ENCODE measurements at regions of chr7 and their contacts with region 1.

Region 1: GRCh38 chr7:5083311-5083711 is 37.7 kb downstream of the RBAK start:
- DNase-seq: no peak
- H3K4me3 Mint-ChIP-seq: no peak overlapping the region
- H3K27ac Mint-ChIP-seq: no peak overlapping the region
- H3K4me1 Mint-ChIP-seq: no peaks in the 10 kb centered on the region
- H3K27me3 Mint-ChIP-seq: peaks cover 4% of the 10 kb centered on the region

Region 2: DNA sequence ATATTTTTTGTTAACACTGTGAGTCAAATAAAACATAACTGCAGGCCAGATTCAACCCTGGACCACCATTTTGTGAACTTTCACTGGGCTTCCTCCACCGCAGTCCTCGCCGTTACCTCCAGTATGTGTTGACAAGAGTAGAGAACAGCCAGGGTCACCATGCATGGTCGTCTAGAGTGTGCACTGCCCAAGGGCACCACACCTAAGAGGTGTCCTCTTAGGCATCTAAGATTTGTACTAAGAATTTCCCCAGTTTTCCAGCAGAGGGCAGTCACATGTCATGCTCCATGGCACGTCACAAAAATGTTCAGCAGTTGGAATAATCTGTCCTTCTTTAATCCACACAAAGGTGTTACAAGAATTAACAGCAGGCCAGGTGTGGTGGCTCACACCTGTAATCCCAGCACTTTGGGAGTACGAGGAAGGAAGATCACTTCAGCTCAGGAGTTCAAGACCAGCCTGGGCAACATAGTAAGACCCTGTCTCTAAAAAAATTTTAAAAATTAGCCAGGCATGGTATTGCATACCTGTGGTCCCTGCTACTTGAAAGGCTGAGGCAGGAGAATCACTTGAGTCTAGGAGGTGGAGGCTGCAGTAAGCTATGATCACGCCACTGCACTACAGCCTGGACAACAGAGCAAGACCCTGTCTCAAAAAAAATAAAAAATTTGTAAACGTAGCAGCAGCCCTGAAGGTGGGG is 472.4 kb before region 1 on chr7:
- intact Hi-C with region 1: loop called (anchors 1 kb)
- DNase-seq: peak; percentile 40
- H3K4me3 Mint-ChIP-seq: no peak overlapping the region
- H3K27ac Mint-ChIP-seq: no peak overlapping the region
- H3K4me1 Mint-ChIP-seq: peaks cover 17% of the 10 kb centered on the region
- H3K27me3 Mint-ChIP-seq: no peaks in the 10 kb centered on the region

Region 3: DNA sequence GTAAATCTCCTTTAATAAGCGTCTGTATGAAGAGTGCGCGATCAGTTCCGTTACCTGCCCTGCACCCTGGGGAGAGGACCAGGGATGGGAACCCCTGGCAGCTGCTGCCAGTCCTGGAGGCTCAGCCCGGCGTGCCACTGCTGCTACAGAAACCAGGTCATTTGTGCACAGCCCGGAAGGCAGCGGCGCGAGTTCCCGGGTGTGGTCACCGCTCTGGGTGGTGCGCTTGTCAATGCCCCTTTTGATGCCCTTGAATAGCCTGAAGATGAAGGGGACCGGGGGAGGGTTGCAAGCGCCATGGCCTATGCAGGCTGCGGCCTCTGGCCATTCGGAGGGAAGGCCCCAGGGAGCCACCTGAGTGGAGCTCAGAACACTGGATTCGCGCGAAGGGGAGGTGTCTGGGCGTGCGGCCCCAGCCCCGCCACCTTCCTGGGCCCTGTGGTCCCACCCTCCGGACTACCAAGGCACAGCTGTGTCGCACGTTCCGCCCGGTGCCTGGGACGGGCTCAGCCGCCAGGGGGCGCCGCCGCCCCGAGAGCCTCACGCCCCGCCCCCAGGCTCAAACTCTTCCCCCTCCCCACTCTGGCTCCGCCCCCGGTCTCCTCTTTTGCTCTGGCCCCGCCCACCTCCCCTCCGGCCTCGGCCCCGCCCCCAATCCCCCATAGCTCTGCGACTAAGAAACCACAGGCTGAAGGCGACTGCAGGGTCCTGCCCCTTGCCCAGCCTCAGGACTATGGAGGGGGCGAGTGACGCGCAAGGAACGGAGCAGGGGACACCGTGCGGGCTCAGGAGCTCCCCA is 291.4 kb before region 1 on chr7:
- intact Hi-C with region 1: loop called (anchors 1 kb)
- DNase-seq: peak; percentile 70
- H3K4me3 Mint-ChIP-seq: no peak overlapping the region
- H3K27ac Mint-ChIP-seq: no peak overlapping the region
- H3K4me1 Mint-ChIP-seq: no peaks in the 10 kb centered on the region
- H3K27me3 Mint-ChIP-seq: no peaks in the 10 kb centered on the region

Region 4: DNA sequence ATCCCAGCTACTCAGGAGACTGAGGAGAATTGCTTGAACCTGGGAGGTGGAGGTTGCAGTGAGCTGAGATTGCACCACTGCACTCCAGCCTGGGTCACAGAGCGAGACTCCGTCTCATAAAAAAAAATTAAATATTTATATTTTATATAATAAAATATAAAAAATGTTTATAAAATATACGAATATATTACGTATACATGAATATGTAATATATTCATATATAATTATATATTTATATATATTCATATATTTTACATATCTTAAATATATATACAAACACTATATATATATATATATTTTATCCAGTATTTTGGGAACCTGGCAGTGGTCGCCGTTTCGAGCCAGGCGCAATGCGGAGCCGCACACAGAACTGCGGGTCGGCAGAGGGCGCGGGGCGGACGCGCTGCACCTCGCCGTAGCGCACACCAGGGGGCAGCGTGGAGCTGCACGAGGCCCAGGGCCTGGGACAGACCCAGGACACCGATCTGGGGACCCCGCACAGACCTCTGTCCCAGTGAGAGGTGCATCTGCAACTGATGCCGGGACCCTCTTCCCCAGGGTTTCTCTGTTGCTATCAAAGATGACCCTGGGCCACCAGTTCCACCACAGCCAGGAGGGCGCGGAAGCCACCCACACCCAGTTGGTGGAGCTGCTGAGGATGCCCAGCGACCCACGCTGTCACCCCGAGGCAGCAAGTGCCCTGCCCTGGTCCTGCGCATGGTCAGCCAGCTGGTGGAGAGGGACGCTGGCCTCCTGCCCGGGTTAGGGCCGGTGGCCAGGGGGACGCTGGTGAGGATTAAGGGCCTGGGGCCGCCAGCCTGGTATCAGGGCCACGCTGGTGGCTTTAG is 285.2 kb before region 1 on chr7:
- intact Hi-C with region 1: loop called (anchors 1 kb)
- DNase-seq: peak; percentile 52
- H3K4me3 Mint-ChIP-seq: no peak overlapping the region
- H3K27ac Mint-ChIP-seq: no peak overlapping the region
- H3K4me1 Mint-ChIP-seq: no peaks in the 10 kb centered on the region
- H3K27me3 Mint-ChIP-seq: no peaks in the 10 kb centered on the region

Region 5: GRCh38 chr7:4830176-4830575 is 253.1 kb before region 1 on chr7:
- intact Hi-C with region 1: loop called (anchors 1 kb)
- DNase-seq: peak; percentile 30
- H3K4me3 Mint-ChIP-seq: no peak overlapping the region
- H3K27ac Mint-ChIP-seq: no peak overlapping the region
- H3K4me1 Mint-ChIP-seq: no peaks in the 10 kb centered on the region
- H3K27me3 Mint-ChIP-seq: peaks cover 5% of the 10 kb centered on the region

Region 6: GRCh38 chr7:4849369-4849768 is 233.9 kb before region 1 on chr7:
- intact Hi-C with region 1: loop called (anchors 1 kb)
- DNase-seq: no peak
- H3K4me3 Mint-ChIP-seq: no peak overlapping the region
- H3K27ac Mint-ChIP-seq: no peak overlapping the region
- H3K4me1 Mint-ChIP-seq: peaks cover 5% of the 10 kb centered on the region
- H3K27me3 Mint-ChIP-seq: peaks cover 11% of the 10 kb centered on the region

Region 7: DNA sequence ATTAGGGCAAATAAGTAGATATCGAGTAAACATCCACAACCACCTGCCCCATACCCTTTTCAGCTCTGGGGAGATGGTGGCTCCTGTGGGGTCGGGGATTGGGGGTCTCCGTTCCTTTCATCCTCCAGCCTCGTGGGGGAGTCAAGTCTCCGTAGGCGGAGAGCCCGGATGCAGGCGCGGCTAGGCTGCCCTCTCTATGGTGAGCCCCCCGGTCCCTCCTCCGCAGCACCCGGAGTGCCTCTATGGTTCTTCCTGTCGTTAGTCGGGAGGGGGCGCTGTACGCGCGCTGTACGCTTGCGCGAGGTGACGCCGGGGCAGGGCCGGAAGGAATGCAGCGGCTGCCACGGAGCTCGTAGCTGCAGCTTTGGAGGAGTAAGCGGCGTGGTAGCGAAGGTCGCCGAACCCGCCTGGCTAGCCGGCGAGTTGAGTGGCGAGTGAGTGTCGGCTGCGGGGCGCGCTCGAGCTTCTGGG is 109.5 kb before region 1 on chr7:
- intact Hi-C with region 1: loop called (anchors 1 kb)
- DNase-seq: peak; percentile 92
- H3K4me3 Mint-ChIP-seq: peak overlapping the region; percentile 94
- H3K27ac Mint-ChIP-seq: peak overlapping the region; percentile 94
- H3K4me1 Mint-ChIP-seq: peaks cover 18% of the 10 kb centered on the region
- H3K27me3 Mint-ChIP-seq: no peaks in the 10 kb centered on the region